ENCODE measurements at regions of chr7 and their contacts with region 1.

Region 1: DNA sequence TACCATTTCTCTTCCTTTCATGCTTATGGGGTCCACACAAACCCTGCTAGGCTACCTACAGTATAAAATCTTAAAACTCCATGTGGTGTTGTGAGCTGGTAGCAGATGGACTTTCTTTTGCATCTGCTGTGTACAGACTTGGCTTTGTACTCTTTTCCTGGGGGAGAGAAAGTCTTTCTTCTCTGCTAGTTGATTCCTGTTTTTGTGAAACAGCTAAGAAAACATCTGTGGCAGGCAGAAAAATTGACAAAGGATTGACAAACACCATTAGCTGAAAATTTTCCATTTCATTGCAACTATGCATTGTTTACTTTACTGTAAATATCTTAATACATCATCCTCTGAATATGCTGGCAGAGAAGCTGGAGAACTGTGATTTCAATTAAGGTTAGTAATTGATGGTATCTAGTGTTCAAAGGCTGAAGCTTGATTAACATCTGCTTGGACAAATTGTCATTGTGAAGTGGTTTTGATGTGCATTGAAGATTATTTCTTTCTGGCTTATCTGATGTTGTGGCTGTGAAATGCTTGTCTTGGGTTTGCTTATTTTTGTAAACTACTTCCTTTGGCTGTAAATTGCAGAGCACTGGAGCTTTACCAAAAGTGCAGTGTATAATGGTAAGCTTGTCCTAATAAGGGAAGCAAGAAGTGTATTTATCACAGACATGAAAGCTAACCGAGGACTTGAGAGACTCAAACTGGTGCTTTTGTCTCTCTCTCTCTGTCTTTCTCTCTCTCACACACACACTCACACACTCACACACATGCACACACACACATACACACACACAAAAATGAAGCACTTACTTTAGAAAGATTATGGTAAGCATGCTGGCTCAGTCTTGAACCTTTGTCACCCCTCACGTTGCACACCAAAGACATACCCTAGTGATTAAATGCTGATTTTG is at the start of gene FOXP2:
- DNase-seq: no peak
- H3K4me3 ChIP-seq: peak within 1 kb of the TSS; percentile 28 to 63 (median 46)
- H3K27ac ChIP-seq: peak within 1 kb of the TSS; percentile 83 to 92 (median 86)
- H3K4me1 ChIP-seq: peaks cover 0 to 57% (median 3%) of the 10 kb centered on the region in 3 donors
- H3K27me3 ChIP-seq: no peaks in the 10 kb centered on the region
- CTCF ChIP-seq: no peak
- POLR2A ChIP-seq: no peak
- total RNA-seq, gene FOXP2: 5.6 to 22.1 (median 6.7) TPM

Region 2: DNA sequence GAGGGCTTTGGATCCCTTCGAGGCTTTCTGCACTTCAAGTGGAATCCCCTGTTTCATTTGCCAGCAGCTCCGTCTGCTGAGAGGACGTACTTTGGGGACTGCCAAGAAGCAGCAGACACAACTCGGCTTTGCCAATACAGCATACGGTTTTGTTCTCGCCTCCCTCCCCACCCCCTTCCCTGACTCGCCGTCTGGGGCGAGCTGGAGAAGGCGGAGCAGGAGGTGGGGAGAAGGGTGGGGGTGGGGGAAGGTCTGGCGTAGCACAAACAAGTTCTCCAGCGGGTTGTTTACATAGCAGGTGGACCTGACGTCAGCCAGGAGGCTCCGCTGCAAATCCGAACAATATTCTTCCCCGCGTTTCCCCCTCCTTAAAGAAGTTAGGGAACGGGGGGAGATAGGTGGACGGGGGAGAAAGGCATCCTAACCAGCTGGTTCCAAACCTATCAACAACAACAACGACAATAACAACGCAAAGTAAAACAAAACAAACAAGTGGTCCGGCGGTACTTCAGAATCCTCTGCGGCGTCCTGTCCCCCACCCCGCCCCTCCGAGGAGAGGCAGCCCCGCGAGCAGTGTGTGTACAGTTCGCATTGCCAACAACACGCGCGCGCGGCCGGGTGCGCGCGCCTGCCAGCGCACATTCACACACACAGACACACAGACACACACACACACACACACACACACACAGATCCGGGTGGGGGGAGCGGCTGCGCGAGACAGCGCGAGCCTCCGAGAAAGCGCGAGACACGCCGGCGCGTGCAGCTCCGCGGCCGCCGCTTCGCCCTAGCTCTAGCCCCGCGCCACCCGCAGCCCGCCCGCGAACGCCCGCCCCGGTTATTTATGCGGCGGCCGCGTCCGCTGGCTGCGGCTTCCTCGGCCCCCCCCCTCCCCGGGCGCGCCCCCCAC is 328.6 kb before region 1 on chr7:
- intact Hi-C with region 1: loop called (anchors 5 kb)
- DNase-seq: no peak
- H3K4me3 ChIP-seq: peak overlapping the region; percentile 81 to 90 (median 84)
- H3K27ac ChIP-seq: peak overlapping the region; percentile 94 to 97 (median 96)
- H3K4me1 ChIP-seq: peaks cover 5 to 70% (median 8%) of the 10 kb centered on the region in 3 donors
- H3K27me3 ChIP-seq: peaks cover 0 to 59% (median 0%) of the 10 kb centered on the region in 4 donors
- CTCF ChIP-seq: no peak
- POLR2A ChIP-seq: peak in 3 of 4 donors; percentile 33 to 77 (median 71)

Measured in esophagus squamous epithelium (tissue), 5 donors.